GM12878 (cell line): ENCODE measurements at regions of chr14 and their contacts with region 1.

Region 1: GRCh38 chr14:98198385-98198784 is 1073.6 kb downstream of the BCL11B start:
- DNase-seq: no peak
- ATAC-seq: peak; percentile 86
- H3K4me3 ChIP-seq: no peak overlapping the region
- H3K27ac ChIP-seq: no peak overlapping the region; the same call in none of the 2 replicates
- H3K4me1 ChIP-seq: no peaks in the 10 kb centered on the region; the same call in 1 of the 2 replicates
- H3K27me3 ChIP-seq: no peaks in the 10 kb centered on the region
- CTCF ChIP-seq: no peak
- EP300 ChIP-seq: peak; percentile 35 to 80; a peak in 2 of 4 replicates
- POLR2A ChIP-seq: no peak
- RAD21 ChIP-seq: no peak

Region 2: DNA sequence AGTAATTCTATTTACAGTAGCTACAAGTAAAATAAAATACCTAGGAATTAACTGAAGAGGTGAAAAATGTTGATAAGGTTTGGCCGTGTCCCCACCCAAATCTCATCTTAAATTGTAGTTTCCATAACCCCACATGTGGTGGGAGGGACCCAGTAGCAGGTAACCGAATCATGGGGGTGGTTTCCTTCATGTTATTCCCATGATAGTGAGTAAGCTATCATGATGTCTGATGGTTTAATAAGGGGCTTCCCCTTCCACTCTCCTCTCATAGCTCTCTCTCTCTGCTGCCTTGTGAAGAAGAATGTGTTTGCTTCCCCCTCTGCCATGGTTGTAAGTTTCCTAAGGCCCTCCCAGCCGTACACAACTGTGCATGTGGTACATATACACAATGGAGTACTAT is 97.1 kb before region 1 on chr14:
- CTCF ChIA-PET with region 1: no interaction called
- POLR2A ChIA-PET with region 1: no interaction called
- RAD21 ChIA-PET with region 1: no interaction called
- SMC1A ChIA-PET with region 1: no interaction called
- in situ Hi-C with region 1: no loop called
- intact Hi-C with region 1: no loop called
- DNase-seq: no peak
- ATAC-seq: no peak
- H3K4me3 ChIP-seq: no peak overlapping the region
- H3K27ac ChIP-seq: no peak overlapping the region
- H3K4me1 ChIP-seq: no peaks in the 10 kb centered on the region
- H3K27me3 ChIP-seq: no peaks in the 10 kb centered on the region
- CTCF ChIP-seq: no peak
- EP300 ChIP-seq: no peak
- POLR2A ChIP-seq: no peak
- RAD21 ChIP-seq: no peak

Region 3: GRCh38 chr14:98173305-98173704 is 25.1 kb before region 1 on chr14:
- CTCF ChIA-PET with region 1: interaction called, 10 read pairs
- POLR2A ChIA-PET with region 1: interaction called, 4 read pairs
- RAD21 ChIA-PET with region 1: interaction called, 309 read pairs
- SMC1A ChIA-PET with region 1: interaction called, 47 read pairs
- in situ Hi-C with region 1: no loop called
- intact Hi-C with region 1: loop called (anchors 2 kb)
- DNase-seq: no peak
- ATAC-seq: no peak; the same call in 2 of the 3 replicates
- H3K4me3 ChIP-seq: no peak overlapping the region
- H3K27ac ChIP-seq: no peak overlapping the region
- H3K4me1 ChIP-seq: peaks cover 5% of the 10 kb centered on the region
- H3K27me3 ChIP-seq: no peaks in the 10 kb centered on the region
- CTCF ChIP-seq: no peak
- EP300 ChIP-seq: no peak
- POLR2A ChIP-seq: no peak
- RAD21 ChIP-seq: no peak

Region 4: GRCh38 chr14:98210045-98210672 is 11.8 kb after region 1 on chr14:
- CTCF ChIA-PET with region 1: interaction called, 5 read pairs
- POLR2A ChIA-PET with region 1: interaction called, 39 read pairs
- RAD21 ChIA-PET with region 1: interaction called, 97 read pairs
- SMC1A ChIA-PET with region 1: interaction called, 67 read pairs
- in situ Hi-C with region 1: no loop called
- intact Hi-C with region 1: no loop called
- DNase-seq: no peak
- ATAC-seq: peak; percentile 47
- H3K4me3 ChIP-seq: no peak overlapping the region
- H3K27ac ChIP-seq: no peak overlapping the region
- H3K4me1 ChIP-seq: peaks cover 7% of the 10 kb centered on the region
- H3K27me3 ChIP-seq: no peaks in the 10 kb centered on the region
- CTCF ChIP-seq: no peak
- EP300 ChIP-seq: no peak
- POLR2A ChIP-seq: no peak
- RAD21 ChIP-seq: 0 out of 2 replicates have a peak, but pooled peaks have one; percentile 0

Region 5: DNA sequence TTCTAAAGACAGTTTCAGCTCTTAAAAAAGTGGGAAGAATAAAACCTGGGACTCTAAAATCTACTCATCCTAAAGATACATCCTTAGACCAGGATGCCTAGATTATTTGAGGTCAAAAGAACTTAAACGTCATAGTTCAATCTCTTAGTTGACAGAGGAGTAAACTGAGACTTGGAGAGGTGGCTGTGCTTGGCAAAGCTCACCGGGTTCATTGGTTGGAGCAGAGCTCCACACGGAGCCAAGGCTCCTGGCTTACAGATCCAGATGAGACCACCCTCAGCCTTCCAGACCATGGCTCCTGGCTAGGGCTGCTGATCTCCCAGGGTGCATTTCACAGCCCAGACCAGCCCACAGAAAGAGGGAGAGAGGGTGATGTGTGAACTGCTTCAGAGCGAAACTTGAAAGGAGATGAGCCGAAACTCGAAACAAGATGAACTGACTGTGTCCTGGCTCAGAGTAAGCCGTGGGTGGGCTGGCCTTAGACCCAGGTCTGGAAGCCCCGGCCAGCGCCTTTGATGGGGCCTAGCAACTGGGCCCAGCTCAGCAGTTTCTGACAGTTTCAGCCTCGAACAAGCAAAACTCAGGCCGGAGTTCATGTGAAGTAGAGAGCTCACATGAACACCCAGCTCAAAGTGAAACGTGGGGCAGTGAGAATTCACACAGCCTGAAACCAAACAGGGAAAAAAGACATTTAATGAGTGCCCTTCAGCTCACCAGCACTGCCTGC is 28.8 kb after region 1 on chr14:
- CTCF ChIA-PET with region 1: interaction called, 22 read pairs
- POLR2A ChIA-PET with region 1: interaction called, 33 read pairs
- RAD21 ChIA-PET with region 1: interaction called, 73 read pairs
- SMC1A ChIA-PET with region 1: interaction called, 320 read pairs
- in situ Hi-C with region 1: no loop called
- intact Hi-C with region 1: loop called (anchors 1 kb)
- DNase-seq: peak; percentile 51
- ATAC-seq: peak; percentile 95
- H3K4me3 ChIP-seq: no peak overlapping the region
- H3K27ac ChIP-seq: peak overlapping the region; percentile 75
- H3K4me1 ChIP-seq: peaks cover 5% of the 10 kb centered on the region
- H3K27me3 ChIP-seq: no peaks in the 10 kb centered on the region
- CTCF ChIP-seq: no peak
- EP300 ChIP-seq: peak in 1 of 2 experiments; percentile 54; a peak in 1 of 4 replicates
- POLR2A ChIP-seq: no peak
- RAD21 ChIP-seq: peak; percentile 13; the same call in 1 of the 2 replicates

Region 6: DNA sequence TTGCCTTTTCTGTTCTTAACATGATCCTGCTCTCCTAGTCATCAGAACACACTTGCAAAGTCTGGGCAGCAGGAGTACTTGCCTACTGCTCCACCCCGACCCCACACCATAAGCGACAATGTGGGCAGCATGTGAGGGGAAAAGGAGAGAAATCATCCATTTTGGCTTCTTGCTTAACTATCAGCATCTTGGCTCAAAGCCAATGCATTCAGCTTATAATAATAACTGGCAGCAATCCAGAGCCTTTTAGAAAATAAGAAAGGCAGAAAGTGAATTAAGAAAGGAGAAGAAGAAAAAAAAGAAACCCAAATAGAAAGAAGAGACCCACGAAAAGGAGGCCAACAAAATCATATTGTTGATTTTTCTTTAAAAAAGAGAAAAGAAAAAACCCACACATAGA is 142.8 kb after region 1 on chr14:
- CTCF ChIA-PET with region 1: no interaction called
- POLR2A ChIA-PET with region 1: no interaction called
- RAD21 ChIA-PET with region 1: no interaction called
- SMC1A ChIA-PET with region 1: no interaction called
- in situ Hi-C with region 1: no loop called
- intact Hi-C with region 1: no loop called
- DNase-seq: no peak
- ATAC-seq: no peak
- H3K4me3 ChIP-seq: no peak overlapping the region
- H3K27ac ChIP-seq: no peak overlapping the region
- H3K4me1 ChIP-seq: no peaks in the 10 kb centered on the region
- H3K27me3 ChIP-seq: no peaks in the 10 kb centered on the region
- CTCF ChIP-seq: no peak
- EP300 ChIP-seq: no peak
- POLR2A ChIP-seq: no peak
- RAD21 ChIP-seq: no peak

Region 7: DNA sequence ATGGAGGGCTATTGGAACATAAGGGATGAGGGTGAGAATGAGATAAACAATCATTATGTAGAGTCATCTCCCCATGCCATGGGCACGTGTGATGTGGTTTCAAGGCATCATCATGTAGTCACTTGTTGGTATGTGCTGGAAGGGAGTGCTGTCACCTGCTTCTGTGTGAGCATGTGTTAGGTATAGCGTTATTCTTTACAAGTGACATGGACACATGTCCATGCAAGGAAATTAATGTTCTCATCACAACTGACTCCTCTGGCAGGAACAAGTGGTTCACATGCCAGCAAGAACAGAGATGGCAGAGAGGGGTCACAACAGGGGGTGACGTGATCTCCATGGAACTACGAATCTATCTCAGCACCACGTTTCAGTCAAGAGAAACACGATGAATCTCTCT is 257.8 kb after region 1 on chr14:
- CTCF ChIA-PET with region 1: no interaction called
- POLR2A ChIA-PET with region 1: no interaction called
- RAD21 ChIA-PET with region 1: no interaction called
- SMC1A ChIA-PET with region 1: no interaction called
- in situ Hi-C with region 1: no loop called
- intact Hi-C with region 1: no loop called
- DNase-seq: no peak
- ATAC-seq: no peak
- H3K4me3 ChIP-seq: no peak overlapping the region
- H3K27ac ChIP-seq: no peak overlapping the region
- H3K4me1 ChIP-seq: no peaks in the 10 kb centered on the region
- H3K27me3 ChIP-seq: no peaks in the 10 kb centered on the region
- CTCF ChIP-seq: no peak
- EP300 ChIP-seq: no peak
- POLR2A ChIP-seq: no peak
- RAD21 ChIP-seq: no peak

Region 8: GRCh38 chr14:99266181-99267178 is 1068.1 kb after region 1 on chr14:
- CTCF ChIA-PET with region 1: interaction called, 17 read pairs
- POLR2A ChIA-PET with region 1: no interaction called
- RAD21 ChIA-PET with region 1: interaction called, 7 read pairs
- SMC1A ChIA-PET with region 1: interaction called, 5 read pairs
- in situ Hi-C with region 1: no loop called
- intact Hi-C with region 1: loop called (anchors 10 kb)
- DNase-seq: no peak
- ATAC-seq: peak; percentile 82
- H3K4me3 ChIP-seq: no peak overlapping the region
- H3K27ac ChIP-seq: no peak overlapping the region
- H3K4me1 ChIP-seq: no peaks in the 10 kb centered on the region
- H3K27me3 ChIP-seq: peaks cover 11 to 13% of the 10 kb centered on the region in 2 experiments
- CTCF ChIP-seq: peak; percentile 98 to 99 (median 98); a peak in 5 of 6 replicates
- EP300 ChIP-seq: no peak
- POLR2A ChIP-seq: no peak
- RAD21 ChIP-seq: peak; percentile 97